ENCODE measurements at regions of chr12 and their contacts with region 1.

Region 1: GRCh38 chr12:89882050-89882449 is 173.4 kb upstream of the ATP2B1 start:
- DNase-seq: peak; percentile 55
- ATAC-seq: peak; percentile 80
- H3K4me3 ChIP-seq: no peak overlapping the region
- H3K27ac ChIP-seq: peak overlapping the region; percentile 99
- H3K4me1 ChIP-seq: peaks cover 40% of the 10 kb centered on the region
- H3K27me3 ChIP-seq: no peaks in the 10 kb centered on the region
- CTCF ChIP-seq: no peak
- EP300 ChIP-seq: peak; percentile 60 to 64; a peak in 2 of 4 replicates
- POLR2A ChIP-seq: no peak
- RAD21 ChIP-seq: peak; percentile 20; the same call in 1 of the 2 replicates

Region 2: DNA sequence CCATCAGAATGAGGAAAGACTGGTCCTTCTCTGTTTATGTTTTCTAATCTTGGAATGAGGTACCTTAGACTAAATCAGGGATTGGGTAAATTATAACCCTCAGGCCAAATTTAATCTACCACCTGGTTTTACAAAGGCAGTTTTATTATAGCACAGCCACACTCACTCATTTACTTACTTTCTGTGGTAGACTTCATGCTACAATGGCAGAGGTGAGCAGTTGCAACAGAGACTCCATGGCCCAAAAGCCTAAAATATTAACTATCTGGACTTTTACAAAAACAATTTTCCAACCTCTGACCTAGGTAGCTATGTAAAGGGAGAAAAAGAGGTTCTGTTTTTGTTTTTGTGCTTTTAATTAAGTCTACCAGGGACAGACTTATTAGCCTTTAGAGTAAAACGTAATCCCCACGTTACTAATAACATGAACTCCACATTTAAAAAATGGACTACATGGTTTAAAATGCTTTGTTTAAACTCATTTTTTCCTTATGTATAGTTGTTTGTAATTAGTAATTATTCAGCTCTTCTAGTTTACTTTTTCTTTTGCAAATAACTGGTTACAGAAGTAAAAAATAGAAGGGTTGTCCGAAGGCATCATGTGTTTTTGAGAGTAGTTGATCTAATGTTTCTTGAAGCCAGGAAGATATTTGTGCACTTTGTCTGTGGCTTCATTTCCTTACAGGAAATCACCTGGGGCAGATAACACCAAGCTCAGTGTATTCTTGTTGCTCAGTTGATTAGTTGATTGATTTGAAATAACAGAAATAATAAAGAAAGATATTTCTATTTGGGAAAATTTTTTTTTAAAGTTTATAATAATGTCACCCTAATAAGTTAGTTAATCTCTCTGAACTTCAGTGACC is 115.9 kb before region 1 on chr12:
- CTCF ChIA-PET with region 1: interaction called, 4 read pairs
- POLR2A ChIA-PET with region 1: no interaction called
- RAD21 ChIA-PET with region 1: interaction called, 6 read pairs
- SMC1A ChIA-PET with region 1: interaction called, 10 read pairs
- in situ Hi-C with region 1: no loop called
- intact Hi-C with region 1: loop called (anchors 1 kb)
- DNase-seq: no peak
- ATAC-seq: peak; percentile 85
- H3K4me3 ChIP-seq: no peak overlapping the region
- H3K27ac ChIP-seq: peak overlapping the region; percentile 79
- H3K4me1 ChIP-seq: peaks cover 21% of the 10 kb centered on the region
- H3K27me3 ChIP-seq: no peaks in the 10 kb centered on the region
- CTCF ChIP-seq: no peak
- EP300 ChIP-seq: peak; percentile 81 to 91
- POLR2A ChIP-seq: no peak
- RAD21 ChIP-seq: 0 out of 2 replicates have a peak, but pooled peaks have one; percentile 7

Region 3: DNA sequence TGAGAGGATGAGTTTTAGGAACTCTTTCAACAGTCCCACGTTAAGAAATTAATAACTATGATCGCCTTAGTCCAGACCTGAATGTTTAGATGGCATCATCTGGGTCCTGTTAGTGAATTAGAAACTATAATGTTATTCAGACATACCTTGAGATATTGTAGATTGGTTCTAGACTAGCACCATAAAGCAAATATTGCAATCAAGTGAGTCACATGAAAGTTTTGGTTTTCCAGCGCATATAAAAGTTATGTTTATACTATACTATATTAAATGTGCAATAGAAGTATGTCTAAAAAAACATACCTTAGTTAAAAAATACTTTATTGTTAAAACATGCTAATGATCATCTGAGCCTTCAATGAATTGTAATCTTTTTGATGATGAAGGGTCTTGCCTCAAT is 66.8 kb before region 1 on chr12:
- CTCF ChIA-PET with region 1: no interaction called
- POLR2A ChIA-PET with region 1: no interaction called
- RAD21 ChIA-PET with region 1: no interaction called
- SMC1A ChIA-PET with region 1: no interaction called
- in situ Hi-C with region 1: no loop called
- intact Hi-C with region 1: no loop called
- DNase-seq: no peak
- ATAC-seq: no peak
- H3K4me3 ChIP-seq: no peak overlapping the region
- H3K27ac ChIP-seq: no peak overlapping the region
- H3K4me1 ChIP-seq: no peaks in the 10 kb centered on the region
- H3K27me3 ChIP-seq: no peaks in the 10 kb centered on the region
- CTCF ChIP-seq: no peak
- EP300 ChIP-seq: no peak
- POLR2A ChIP-seq: no peak
- RAD21 ChIP-seq: no peak

Region 4: DNA sequence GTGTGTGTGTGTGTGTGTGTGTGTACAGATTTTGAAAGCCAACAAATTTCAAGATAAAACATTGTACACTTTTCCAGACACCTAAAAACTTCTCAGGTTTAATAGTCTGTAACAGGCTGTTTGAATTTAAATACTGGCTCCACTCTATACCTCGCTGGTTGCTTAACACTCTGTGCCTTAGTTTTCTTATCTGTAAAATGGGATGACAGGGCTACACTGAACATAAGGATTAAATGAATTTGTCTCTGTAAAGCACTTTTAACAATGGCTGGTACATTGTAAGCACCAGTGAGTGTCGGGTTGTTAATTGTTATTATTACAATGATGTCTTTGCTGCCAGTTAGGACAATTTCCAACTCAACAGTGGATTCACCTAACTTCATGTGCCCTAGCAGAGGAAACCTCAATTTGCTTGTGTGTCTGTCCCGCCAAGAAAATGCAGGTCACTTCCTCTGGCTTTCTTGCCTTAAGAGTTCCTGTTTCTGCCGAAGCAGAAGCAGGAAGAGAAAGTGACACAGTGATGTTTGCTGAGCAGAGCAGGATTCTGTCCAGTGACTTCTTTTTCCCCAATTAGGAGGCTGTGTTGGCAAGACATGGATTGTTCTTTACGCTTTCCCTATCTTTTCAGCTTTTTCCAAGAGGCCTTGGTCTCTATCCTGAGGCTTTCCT is 19.4 kb before region 1 on chr12:
- CTCF ChIA-PET with region 1: interaction called, 7 read pairs
- POLR2A ChIA-PET with region 1: interaction called, 5 read pairs
- RAD21 ChIA-PET with region 1: interaction called, 21 read pairs
- SMC1A ChIA-PET with region 1: interaction called, 49 read pairs
- in situ Hi-C with region 1: no loop called
- intact Hi-C with region 1: loop called (anchors 1 kb)
- DNase-seq: peak; percentile 79
- ATAC-seq: peak; percentile 75
- H3K4me3 ChIP-seq: peak overlapping the region; percentile 60
- H3K27ac ChIP-seq: peak overlapping the region; percentile 89
- H3K4me1 ChIP-seq: peaks cover 39% of the 10 kb centered on the region
- H3K27me3 ChIP-seq: no peaks in the 10 kb centered on the region
- CTCF ChIP-seq: no peak
- EP300 ChIP-seq: peak in 1 of 2 experiments; percentile 17; a peak in 1 of 4 replicates
- POLR2A ChIP-seq: peak; percentile 58
- RAD21 ChIP-seq: 0 out of 2 replicates have a peak, but pooled peaks have one; percentile 19

Region 5: GRCh38 chr12:89901906-89902642 is 20.0 kb after region 1 on chr12:
- CTCF ChIA-PET with region 1: interaction called, 4 read pairs
- POLR2A ChIA-PET with region 1: interaction called, 3 read pairs
- RAD21 ChIA-PET with region 1: no interaction called
- SMC1A ChIA-PET with region 1: interaction called, 12 read pairs
- in situ Hi-C with region 1: no loop called
- intact Hi-C with region 1: no loop called
- DNase-seq: no peak
- ATAC-seq: peak; percentile 53; the same call in 2 of the 3 replicates
- H3K4me3 ChIP-seq: no peak overlapping the region
- H3K27ac ChIP-seq: no peak overlapping the region
- H3K4me1 ChIP-seq: no peaks in the 10 kb centered on the region
- H3K27me3 ChIP-seq: no peaks in the 10 kb centered on the region
- CTCF ChIP-seq: no peak
- EP300 ChIP-seq: no peak
- POLR2A ChIP-seq: no peak
- RAD21 ChIP-seq: no peak

Region 6: GRCh38 chr12:89927226-89927698 is 45.2 kb after region 1 on chr12:
- CTCF ChIA-PET with region 1: interaction called, 3 read pairs
- POLR2A ChIA-PET with region 1: interaction called, 6 read pairs
- RAD21 ChIA-PET with region 1: interaction called, 35 read pairs
- SMC1A ChIA-PET with region 1: interaction called, 45 read pairs
- in situ Hi-C with region 1: loop called (anchors 5 kb)
- intact Hi-C with region 1: loop called (anchors 1 kb)
- DNase-seq: peak; percentile 79
- ATAC-seq: peak; percentile 91
- H3K4me3 ChIP-seq: peak overlapping the region; percentile 67
- H3K27ac ChIP-seq: peak overlapping the region; percentile 96
- H3K4me1 ChIP-seq: peaks cover 3% of the 10 kb centered on the region; the same call in 1 of the 2 replicates
- H3K27me3 ChIP-seq: no peaks in the 10 kb centered on the region
- CTCF ChIP-seq: no peak
- EP300 ChIP-seq: peak; percentile 85 to 97; a peak in 3 of 4 replicates
- POLR2A ChIP-seq: no peak
- RAD21 ChIP-seq: peak; percentile 29; the same call in 1 of the 2 replicates

Region 7: DNA sequence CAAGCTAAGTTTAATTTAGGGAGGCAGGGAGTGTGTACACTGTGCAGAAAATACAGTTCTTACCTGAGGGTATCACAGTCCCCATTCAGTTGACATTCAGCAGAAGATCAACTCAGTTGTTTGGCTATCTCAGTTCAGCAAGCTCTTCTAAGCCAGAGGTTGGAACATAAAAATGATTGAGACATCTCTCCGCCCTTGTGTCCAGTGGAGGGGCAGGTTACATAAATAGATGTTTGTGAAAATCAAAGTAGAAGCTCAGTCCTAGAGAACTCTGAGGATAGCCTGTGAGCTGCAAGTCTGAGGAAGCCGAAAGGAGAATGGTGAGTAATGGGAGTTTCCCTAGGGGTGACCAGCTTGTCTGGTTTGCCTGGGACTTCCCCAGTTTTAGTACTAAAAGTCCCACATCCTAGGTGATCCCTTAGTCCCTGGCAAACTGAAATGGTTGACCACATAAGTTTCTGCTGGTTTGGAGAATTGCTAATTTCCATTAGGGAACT is 78.0 kb after region 1 on chr12:
- CTCF ChIA-PET with region 1: interaction called, 3 read pairs
- POLR2A ChIA-PET with region 1: interaction called, 3 read pairs
- RAD21 ChIA-PET with region 1: interaction called, 18 read pairs
- SMC1A ChIA-PET with region 1: interaction called, 4 read pairs
- in situ Hi-C with region 1: no loop called
- intact Hi-C with region 1: loop called (anchors 2 kb)
- DNase-seq: peak; percentile 68
- ATAC-seq: peak; percentile 90
- H3K4me3 ChIP-seq: peak overlapping the region; percentile 65; the same call in 1 of the 2 replicates
- H3K27ac ChIP-seq: peak overlapping the region; percentile 71
- H3K4me1 ChIP-seq: peaks cover 9% of the 10 kb centered on the region
- H3K27me3 ChIP-seq: no peaks in the 10 kb centered on the region
- CTCF ChIP-seq: no peak
- EP300 ChIP-seq: peak in 1 of 2 experiments; percentile 55; a peak in 1 of 4 replicates
- POLR2A ChIP-seq: no peak
- RAD21 ChIP-seq: no peak

Region 8: DNA sequence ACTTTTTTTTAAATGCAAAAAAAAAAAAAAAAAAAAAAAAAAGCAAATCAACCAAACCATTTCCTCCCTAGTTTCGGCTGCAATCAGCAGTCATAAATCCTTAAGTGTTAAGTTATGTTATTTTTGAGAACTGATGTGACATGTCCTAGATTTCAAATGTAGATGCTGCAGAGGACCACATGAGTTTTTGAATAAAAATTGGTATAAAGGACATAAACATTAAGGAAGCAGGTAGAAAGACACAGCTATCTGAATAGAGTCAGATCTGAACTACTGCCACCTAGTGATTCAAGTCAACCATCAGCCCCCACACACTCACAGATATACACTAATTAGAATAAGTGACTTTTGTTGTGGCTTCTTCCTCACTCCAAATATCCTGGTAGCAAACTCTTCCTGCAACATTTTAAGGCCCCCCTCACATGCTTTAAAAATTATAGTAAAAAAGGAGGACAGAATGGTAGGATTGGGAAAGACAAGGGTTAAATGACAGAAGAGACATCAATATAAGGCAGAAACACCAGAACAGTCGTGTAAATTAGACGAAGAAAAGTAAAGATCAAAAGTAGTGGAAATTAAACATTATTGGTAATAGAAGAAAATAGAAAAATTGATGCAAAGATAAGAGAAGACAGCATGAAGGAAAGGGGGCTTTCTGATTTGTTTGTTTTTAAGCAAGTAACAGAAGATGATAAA is 221.1 kb after region 1 on chr12:
- CTCF ChIA-PET with region 1: no interaction called
- POLR2A ChIA-PET with region 1: no interaction called
- RAD21 ChIA-PET with region 1: no interaction called
- SMC1A ChIA-PET with region 1: interaction called, 3 read pairs
- in situ Hi-C with region 1: no loop called
- intact Hi-C with region 1: loop called (anchors 5 kb)
- DNase-seq: peak; percentile 24
- ATAC-seq: peak; percentile 98
- H3K4me3 ChIP-seq: no peak overlapping the region
- H3K27ac ChIP-seq: no peak overlapping the region
- H3K4me1 ChIP-seq: no peaks in the 10 kb centered on the region
- H3K27me3 ChIP-seq: no peaks in the 10 kb centered on the region
- CTCF ChIP-seq: peak; percentile 56 to 62 (median 57)
- EP300 ChIP-seq: no peak
- POLR2A ChIP-seq: no peak
- RAD21 ChIP-seq: peak; percentile 63